Ovary (tissue), 10 donors: ENCODE measurements at regions of chr18 and their contacts with region 1.

Region 1: DNA sequence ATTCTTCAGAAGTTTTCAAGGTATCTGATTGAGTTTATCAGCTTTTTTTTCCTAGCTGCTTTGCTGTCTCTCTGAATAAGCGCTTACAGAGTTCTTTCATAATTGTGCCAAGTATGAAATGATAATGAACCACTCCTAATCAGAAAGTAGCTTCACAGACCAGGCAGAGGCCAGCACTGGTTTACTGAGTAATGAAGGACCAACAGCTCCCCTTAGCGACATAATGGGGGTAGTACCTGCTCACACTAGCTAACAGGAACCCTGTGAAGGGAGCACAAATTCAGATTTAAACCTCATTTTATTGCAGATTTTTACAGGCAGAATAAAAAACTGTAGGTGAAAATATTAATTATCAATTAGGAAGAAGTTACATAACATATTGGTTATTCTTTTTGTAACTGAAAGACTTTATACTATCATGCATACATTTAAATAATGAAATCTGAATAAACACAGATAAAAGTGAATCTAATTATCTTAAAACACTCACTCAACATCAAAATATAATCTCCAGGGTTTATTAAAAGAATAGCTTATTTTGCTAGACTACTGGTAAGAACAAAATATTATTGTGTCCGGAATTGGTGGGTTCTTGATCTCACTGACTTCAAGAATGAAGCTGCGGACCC is 53.7 kb upstream of the LRRC30 start:
- DNase-seq: peak; percentile 43 to 76 (median 57)
- H3K4me3 ChIP-seq: no peak overlapping the region
- H3K27ac ChIP-seq: no peak overlapping the region
- H3K4me1 ChIP-seq: no peaks in the 10 kb centered on the region
- H3K27me3 ChIP-seq: no peaks in the 10 kb centered on the region
- CTCF ChIP-seq: peak; percentile 34 to 83 (median 66)
- EP300 ChIP-seq: no peak
- POLR2A ChIP-seq: no peak

Region 2: DNA sequence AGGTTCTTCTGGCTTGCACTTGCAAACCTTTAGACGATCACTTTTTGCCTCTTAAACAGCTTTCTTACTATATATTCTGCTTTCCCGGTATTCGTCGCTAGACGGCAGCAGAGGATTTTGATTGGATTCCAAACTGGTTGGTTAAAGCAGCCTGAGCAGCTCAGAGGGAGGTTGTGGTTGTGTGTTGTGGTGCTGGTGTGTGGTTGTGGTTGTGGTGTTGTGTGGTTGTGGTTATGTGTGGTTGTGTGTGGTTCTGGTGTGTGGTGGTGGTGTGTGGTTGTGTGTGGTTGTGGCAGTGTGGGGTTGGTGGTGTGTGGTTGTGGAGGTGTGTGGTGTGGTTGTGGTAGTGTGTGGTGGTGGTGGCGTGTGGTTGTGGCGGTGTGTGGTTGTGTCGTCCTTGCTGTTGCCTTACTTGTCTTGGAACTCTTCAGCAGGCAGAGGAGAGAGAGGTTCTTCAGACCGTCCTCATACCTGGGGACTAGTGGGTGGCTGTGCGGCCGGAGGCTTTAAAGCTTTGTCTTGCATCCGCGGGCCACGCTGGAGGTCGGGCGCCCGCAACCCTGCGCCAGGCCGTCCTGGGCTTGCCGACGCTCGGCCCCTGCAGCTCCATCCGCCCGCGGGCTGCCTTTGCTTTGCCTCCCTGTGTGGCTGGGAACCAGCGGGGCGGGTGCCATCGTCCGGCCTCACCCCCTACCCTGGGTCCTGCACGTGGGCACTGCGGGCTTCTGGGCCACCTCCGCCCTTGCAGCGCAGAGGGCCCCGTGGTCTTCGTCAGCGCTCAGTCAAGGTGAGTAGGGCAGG is 256.9 kb before region 1 on chr18:
- intact Hi-C with region 1: loop called in 3 of 4 experiments (anchors 5 to 10 kb)
- DNase-seq: peak; percentile 25 to 58 (median 40)
- H3K4me3 ChIP-seq: no peak overlapping the region
- H3K27ac ChIP-seq: no peak overlapping the region
- H3K4me1 ChIP-seq: no peaks in the 10 kb centered on the region
- H3K27me3 ChIP-seq: no peaks in the 10 kb centered on the region
- CTCF ChIP-seq: peak in 1 of 3 donors; percentile 35
- EP300 ChIP-seq: no peak
- POLR2A ChIP-seq: no peak

Region 3: GRCh38 chr18:7038330-7038851 is 138.8 kb before region 1 on chr18:
- intact Hi-C with region 1: loop called in 3 of 4 experiments (anchors 5 to 10 kb)
- DNase-seq: peak; percentile 87 to 95 (median 90)
- H3K4me3 ChIP-seq: peak overlapping the region; percentile 1
- H3K27ac ChIP-seq: peak overlapping the region; percentile 50 to 63
- H3K4me1 ChIP-seq: peaks cover 2% of the 10 kb centered on the region
- H3K27me3 ChIP-seq: no peaks in the 10 kb centered on the region
- CTCF ChIP-seq: peak; percentile 40 to 91 (median 82)
- EP300 ChIP-seq: peak; percentile 92
- POLR2A ChIP-seq: no peak